Dorsolateral prefrontal cortex (tissue), 120 donors: ENCODE measurements at regions of chr14 and their contacts with region 1.

Region 1: GRCh38 chr14:45083971-45084722 is at the start of gene PRPF39:
- DNase-seq: peak; percentile 86 to 97 (median 92)
- H3K4me3 ChIP-seq: peak within 1 kb of the TSS; percentile 60 to 98 (median 89)
- H3K27ac ChIP-seq: peak within 1 kb of the TSS in 56 of 59 donors; percentile 41 to 90 (median 80)
- H3K27me3 ChIP-seq: no peaks in the 10 kb centered on the region
- CTCF ChIP-seq: peak in 22 of 56 donors; percentile 8 to 43 (median 24)
- total RNA-seq, gene PRPF39: 39.6 to 77.7 (median 57.3) TPM

Region 2: DNA sequence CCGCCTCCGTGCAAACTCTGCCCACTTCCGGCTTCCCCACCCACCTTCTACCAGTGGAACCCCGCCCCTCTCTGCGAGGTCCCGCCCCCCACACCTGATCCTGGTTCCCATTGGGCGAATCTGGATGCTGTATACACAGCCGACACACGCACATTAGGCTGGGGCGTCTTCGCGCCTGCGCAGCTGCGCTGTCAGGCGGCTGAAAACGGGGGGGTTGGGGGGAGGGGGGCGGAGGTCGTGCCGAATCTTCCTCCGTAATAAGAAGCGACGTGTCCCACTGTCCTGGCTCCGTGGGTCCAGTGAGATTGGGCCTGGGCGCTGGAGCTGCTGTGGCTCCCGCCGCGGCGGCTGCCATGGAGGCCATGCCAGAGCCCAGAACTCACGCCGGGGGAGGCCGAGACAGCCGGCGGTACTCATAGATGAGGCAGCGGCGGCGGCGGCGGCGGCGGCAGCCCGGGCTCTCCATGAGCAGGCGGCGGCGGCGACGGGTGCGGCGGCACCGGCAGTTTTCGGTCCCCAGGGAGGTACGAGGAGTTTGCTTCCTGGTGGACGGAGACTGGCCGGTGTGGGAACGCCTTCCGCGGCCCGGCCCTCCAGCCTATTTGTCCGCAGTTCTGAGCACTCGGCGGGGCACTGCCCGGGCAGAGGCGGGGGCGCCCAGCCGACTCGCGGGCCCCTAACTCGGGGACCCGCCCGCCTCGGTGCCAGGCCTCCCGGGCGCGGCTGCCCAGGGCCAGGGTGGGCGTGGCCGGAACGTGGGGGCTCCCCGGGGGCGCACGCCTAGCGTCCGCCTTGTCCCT is 186.9 kb before region 1 on chr14:
- intact Hi-C with region 1: loop called in 1 of 2 experiments (anchors 10 kb)
- DNase-seq: peak; percentile 92 to 100 (median 99)
- H3K4me3 ChIP-seq: peak overlapping the region; percentile 60 to 98 (median 89)
- H3K27ac ChIP-seq: peak overlapping the region; percentile 88 to 99 (median 96)
- H3K27me3 ChIP-seq: no peaks in the 10 kb centered on the region
- CTCF ChIP-seq: peak in 9 of 56 donors; percentile 1 to 35 (median 22)

Region 3: GRCh38 chr14:44961604-44962333 is 122.4 kb before region 1 on chr14 and contains the starts of genes KLHL28 and TOGARAM1:
- intact Hi-C with region 1: loop called (anchors 1 to 2 kb)
- DNase-seq: peak; percentile 96 to 100 (median 99)
- H3K4me3 ChIP-seq: peak within 1 kb of the TSS; percentile 56 to 98 (median 87)
- H3K27ac ChIP-seq: peak within 1 kb of the TSS; percentile 42 to 95 (median 87)
- H3K27me3 ChIP-seq: no peaks in the 10 kb centered on the region
- CTCF ChIP-seq: peak in 11 of 56 donors; percentile 5 to 40 (median 15)
- total RNA-seq, gene KLHL28: 15.5 to 37.2 (median 24.2) TPM
- total RNA-seq, gene TOGARAM1: 39.9 to 74.9 (median 59.1) TPM

Region 4: DNA sequence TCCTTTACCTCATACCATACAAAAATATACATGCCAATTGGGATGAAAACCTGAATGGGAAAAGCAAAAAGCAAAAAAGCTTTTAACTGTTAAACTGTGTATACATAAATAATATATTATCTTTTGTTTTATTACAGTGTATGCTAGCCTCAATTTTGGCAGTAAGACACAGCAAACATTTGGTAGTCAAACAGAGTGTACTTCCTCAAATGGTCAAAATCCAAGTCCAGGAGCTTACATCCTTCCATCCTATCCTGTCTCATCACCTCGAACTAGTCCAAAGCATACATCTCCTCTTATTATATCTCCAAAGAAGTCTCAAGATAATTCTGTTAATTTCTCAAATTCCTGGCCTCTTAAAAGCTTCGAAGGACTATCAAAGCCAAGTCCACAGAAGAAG is 80.2 kb before region 1 on chr14:
- intact Hi-C with region 1: no loop called
- DNase-seq: no peak
- H3K4me3 ChIP-seq: no peak overlapping the region
- H3K27ac ChIP-seq: no peak overlapping the region
- H3K27me3 ChIP-seq: no peaks in the 10 kb centered on the region
- CTCF ChIP-seq: no peak